Esophagus squamous epithelium (tissue), 5 donors: ENCODE measurements at regions of chr6 and their contacts with region 1.

Region 1: DNA sequence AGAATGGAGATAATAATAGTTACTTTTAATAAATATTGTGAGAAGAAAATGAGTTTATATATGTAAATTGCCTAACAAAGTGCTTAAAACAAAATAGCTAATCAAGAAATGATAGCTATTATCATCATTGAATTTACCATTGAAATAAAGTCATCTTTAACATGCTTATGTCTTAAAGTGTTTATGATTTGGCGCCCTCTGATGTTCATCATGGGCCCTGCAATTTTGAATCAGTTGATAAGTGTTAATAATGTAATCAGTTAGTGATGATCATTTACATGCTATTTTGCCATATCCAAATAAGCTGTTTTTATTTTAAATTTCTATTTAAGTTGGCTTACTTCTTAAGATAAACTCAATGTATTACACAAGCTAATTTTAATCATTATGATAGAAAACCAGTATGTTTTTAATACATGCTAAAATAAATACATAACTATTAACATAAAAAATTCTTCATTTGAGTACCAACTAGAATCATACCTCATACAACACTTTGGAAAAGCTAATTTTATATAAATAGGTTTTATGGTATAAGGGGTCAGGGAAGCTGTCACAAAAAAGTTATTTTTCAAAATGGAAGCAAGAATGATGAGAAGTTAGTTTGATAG is 39.2 kb upstream of the TPD52L1 start:
- DNase-seq: no peak
- H3K4me3 ChIP-seq: no peak overlapping the region
- H3K27ac ChIP-seq: no peak overlapping the region
- H3K4me1 ChIP-seq: no peaks in the 10 kb centered on the region
- H3K27me3 ChIP-seq: no peaks in the 10 kb centered on the region
- CTCF ChIP-seq: peak; percentile 38 to 84 (median 78)
- POLR2A ChIP-seq: no peak

Region 2: DNA sequence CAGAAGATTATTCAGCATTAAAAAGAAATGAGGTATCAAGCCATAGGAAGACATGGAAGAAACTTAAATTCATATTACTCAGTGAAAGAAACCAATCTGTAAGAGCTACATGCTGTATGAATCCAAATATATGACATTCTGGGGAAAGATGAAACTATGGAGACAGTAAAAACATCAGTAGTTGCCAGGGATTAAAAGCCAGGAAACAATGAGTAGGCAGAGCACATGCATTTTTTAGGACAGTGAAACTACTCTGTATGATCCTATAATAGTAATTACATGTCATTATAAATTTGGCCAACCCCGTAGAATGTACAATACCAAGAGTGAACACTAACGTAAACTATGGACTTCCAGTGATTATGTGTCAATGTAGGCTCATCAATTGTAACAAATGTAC is 244.9 kb before region 1 on chr6:
- intact Hi-C with region 1: loop called (anchors 5 kb)
- DNase-seq: no peak
- H3K4me3 ChIP-seq: no peak overlapping the region
- H3K27ac ChIP-seq: no peak overlapping the region
- H3K4me1 ChIP-seq: no peaks in the 10 kb centered on the region
- H3K27me3 ChIP-seq: no peaks in the 10 kb centered on the region
- CTCF ChIP-seq: no peak
- POLR2A ChIP-seq: no peak